ENCODE measurements at regions of chr13 and their contacts with region 1.

Region 1: DNA sequence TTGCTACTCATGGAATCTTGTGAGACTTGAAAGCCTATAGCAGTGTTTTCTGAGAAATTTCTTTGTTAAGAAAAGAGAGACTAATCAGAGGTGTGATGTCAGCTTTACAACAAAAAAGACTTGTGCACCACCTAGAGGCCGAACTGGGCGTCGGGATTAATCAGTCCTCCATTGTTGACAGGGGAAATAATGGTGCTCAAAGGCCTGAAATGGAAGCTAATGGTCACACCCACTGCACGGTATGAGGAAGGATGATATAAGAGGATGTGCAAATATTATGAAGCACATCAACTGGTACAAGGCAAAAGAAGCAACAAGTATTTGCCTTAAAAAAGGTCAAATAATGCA is 480.2 kb upstream of the MIR17HG start:
- DNase-seq: no peak
- ATAC-seq: peak; percentile 80

Region 2: DNA sequence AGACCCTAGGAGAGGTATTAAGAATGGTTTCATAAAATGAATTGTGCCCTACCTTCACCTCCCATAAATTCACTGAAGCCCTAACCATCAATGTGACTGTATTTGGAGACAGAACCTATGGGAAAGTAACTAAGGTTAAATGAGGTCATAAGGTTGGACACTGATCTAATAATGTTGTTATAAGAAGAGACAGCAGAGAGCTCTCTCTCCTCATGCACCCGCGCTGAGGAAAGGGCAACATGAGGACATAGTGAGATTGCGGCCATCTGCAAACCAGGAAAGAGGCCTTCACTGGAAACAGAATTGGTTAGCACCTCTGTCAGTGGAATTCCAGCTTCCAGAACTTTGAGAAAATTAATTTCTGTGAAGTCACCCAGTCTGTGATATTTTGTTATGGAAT is 916.0 kb before region 1 on chr13:
- intact Hi-C with region 1: loop called (anchors 5 kb)
- DNase-seq: no peak
- ATAC-seq: no peak

Region 3: DNA sequence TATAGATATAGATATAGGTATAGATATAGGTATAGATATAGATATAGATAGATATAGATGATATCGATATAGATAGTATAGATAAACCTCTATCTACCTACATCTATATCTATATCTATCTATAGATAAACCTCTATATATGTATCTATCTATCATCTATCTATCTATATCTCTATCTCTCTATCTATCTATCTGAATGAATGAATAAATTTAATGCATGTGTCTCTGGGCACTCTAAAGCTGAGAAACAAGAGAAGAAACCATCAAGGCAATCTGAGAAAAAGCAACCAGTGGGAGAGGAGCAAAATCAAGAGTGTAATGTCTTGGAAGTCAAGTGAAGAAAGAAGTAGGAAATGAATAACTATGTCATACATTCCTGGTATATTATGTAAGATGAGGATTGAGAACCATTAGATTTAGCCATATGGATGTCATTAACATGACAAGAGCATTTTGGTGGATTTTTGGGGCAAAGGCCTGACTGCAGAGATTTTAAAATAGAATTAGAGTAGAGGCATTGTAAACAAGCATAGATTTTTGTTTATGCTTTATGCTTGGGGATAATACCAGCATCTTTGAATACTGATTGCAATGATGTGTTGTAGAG is 782.5 kb before region 1 on chr13:
- intact Hi-C with region 1: loop called (anchors 10 kb)
- DNase-seq: no peak
- ATAC-seq: no peak

Region 4: GRCh38 chr13:90375851-90376250 is 491.5 kb before region 1 on chr13:
- intact Hi-C with region 1: loop called (anchors 10 kb)
- DNase-seq: no peak
- ATAC-seq: no peak

Region 5: GRCh38 chr13:90420683-90421082 is 446.6 kb before region 1 on chr13:
- intact Hi-C with region 1: loop called (anchors 10 kb)
- DNase-seq: no peak
- ATAC-seq: no peak

Region 6: DNA sequence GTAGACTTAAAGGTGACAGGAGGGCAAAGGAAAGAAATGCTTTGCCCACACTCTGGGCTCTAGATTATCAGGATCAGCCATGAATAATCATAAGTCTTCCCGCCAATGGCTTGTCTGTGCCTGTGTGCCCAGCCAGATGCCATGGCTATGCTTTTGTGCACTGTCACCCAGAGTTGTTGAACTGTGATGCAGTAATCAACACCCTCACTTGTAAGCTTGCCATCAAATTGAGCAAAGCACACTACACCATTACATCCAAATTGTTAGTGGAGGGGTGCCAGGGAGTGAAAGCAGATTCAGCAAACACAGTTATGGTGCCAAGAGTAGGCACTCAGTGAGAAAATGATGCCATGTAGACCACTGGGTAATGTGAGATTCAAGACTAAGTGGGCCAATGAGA is 365.2 kb before region 1 on chr13:
- intact Hi-C with region 1: loop called (anchors 10 kb)
- DNase-seq: peak; percentile 65
- ATAC-seq: peak; percentile 93

Region 7: DNA sequence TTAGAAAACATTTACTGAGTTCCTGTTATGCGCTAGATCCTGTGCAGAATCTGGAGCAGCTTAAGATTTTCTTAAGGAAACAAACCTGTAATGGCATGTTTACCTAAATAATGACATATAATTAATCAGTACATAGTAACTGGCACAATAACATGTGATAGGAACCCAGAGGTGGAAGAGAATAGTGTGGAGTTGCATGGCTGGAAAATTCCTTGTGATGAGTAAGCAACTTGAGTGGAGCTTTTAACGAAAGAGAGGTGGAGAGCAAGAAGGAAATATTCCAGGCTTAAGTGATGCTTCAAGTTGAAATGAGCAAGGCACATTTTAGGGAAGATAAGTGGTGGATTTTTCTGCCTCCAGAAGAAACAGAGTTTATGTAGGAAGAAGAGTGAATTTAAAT is 521.9 kb after region 1 on chr13:
- intact Hi-C with region 1: no loop called
- DNase-seq: no peak
- ATAC-seq: no peak

Measured in Right ventricle myocardium inferior (tissue), 1 donor.